Esophagus muscularis mucosa (tissue), 4 donors: ENCODE measurements at regions of chr6 and their contacts with region 1.

Region 1: GRCh38 chr6:53794720-53795253 is at the start of gene LRRC1:
- DNase-seq: peak; percentile 97
- H3K4me3 ChIP-seq: peak within 1 kb of the TSS; percentile 77 to 96 (median 88)
- H3K27ac ChIP-seq: peak within 1 kb of the TSS; percentile 76 to 88 (median 83)
- H3K4me1 ChIP-seq: peaks cover 16 to 37% (median 32%) of the 10 kb centered on the region in 4 donors
- H3K27me3 ChIP-seq: no peaks in the 10 kb centered on the region
- CTCF ChIP-seq: no peak
- EP300 ChIP-seq: no peak
- POLR2A ChIP-seq: no peak
- total RNA-seq, gene LRRC1: 10.4 to 13.0 (median 12.6) TPM

Region 2: DNA sequence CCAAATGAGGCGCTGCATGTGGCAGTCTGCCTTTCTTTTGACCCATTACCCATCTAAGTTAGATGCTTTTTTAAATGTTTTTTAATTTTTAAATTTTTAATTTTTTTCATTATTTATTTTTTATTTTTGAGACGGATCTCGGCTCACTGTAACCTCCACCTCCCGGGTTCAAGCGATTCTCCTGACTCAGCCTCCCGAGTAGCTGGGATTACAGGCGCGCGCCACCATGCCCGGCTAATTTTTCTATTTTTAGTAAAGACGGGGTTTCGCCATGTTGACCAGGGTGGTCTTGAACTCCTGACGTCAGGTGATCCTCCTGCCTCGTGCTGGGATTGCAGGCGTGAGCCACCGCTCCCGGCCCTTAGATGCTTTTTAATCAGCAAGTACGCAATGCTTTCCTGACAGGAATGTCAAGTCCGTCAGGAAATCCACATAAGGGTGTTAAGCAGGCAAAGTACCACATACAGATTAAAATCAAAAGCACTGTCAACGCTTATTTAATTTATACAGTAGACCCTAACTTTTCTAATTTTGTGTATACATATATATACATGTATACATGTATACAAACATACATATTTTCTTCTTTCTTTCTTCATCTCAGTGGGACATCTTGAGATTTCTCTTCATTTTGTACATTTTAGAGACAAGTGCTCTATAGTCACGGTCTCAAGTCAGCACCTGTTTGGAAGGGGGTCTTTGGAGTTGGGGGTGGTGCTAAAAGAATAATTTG is 798.7 kb before region 1 on chr6:
- intact Hi-C with region 1: loop called (anchors 10 kb)
- DNase-seq: no peak
- H3K4me3 ChIP-seq: peak overlapping the region; percentile 33 to 80 (median 73)
- H3K27ac ChIP-seq: peak overlapping the region; percentile 90 to 92 (median 92)
- H3K4me1 ChIP-seq: peaks cover 0 to 36% (median 28%) of the 10 kb centered on the region in 4 donors
- H3K27me3 ChIP-seq: no peaks in the 10 kb centered on the region
- CTCF ChIP-seq: no peak
- EP300 ChIP-seq: no peak
- POLR2A ChIP-seq: no peak

Region 3: DNA sequence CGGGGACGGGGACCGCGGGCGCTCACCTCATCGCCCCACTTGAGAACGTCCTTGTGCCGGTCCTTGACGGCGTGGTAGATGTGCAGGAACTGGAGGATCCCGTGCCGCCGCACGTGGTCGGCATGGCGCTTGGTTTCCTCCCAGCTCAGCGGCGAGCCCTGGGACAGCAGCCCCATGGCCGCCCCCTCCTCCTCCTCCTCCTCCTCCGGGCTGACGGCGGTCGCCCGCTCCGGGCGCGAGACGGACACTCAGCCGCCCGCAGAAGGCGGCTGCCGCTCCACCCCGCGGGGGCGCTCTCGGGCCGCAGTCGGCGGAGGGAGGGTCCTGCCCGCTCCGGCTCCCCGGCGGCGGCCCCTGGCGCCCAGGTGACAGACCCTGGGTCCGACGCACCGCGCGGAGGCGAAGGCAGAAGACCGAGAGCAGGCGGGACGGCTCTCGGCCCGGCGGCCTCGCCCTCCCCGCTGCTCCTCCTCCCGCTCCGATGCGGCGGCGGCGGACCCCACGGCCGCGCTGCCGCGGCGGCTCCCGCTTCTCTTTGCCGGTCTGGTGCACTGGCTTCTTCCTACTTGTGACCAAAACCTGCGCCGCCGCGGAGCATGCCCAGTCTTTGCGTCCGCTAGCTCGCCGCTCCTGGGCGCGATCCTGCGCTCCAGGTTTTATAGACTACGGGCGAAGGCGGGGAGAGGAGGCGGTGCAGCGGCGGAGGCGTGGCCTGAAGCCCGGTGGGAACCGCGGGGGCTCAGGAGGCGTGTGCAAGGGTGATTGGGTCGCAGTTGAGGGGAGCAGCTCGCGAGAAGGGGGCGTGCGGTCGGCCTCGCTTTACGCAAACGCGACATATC is 250.1 kb before region 1 on chr6 and contains the start of gene GCLC:
- intact Hi-C with region 1: loop called (anchors 10 kb)
- DNase-seq: peak; percentile 98
- H3K4me3 ChIP-seq: peak within 1 kb of the TSS; percentile 77 to 98 (median 86)
- H3K27ac ChIP-seq: peak within 1 kb of the TSS; percentile 95 to 99 (median 98)
- H3K4me1 ChIP-seq: peaks cover 25 to 72% (median 68%) of the 10 kb centered on the region in 4 donors
- H3K27me3 ChIP-seq: no peaks in the 10 kb centered on the region
- CTCF ChIP-seq: peak; percentile 72 to 83 (median 78)
- EP300 ChIP-seq: no peak
- POLR2A ChIP-seq: peak; percentile 58
- total RNA-seq, gene GCLC: 57.7 to 70.8 (median 64.6) TPM

Region 4: DNA sequence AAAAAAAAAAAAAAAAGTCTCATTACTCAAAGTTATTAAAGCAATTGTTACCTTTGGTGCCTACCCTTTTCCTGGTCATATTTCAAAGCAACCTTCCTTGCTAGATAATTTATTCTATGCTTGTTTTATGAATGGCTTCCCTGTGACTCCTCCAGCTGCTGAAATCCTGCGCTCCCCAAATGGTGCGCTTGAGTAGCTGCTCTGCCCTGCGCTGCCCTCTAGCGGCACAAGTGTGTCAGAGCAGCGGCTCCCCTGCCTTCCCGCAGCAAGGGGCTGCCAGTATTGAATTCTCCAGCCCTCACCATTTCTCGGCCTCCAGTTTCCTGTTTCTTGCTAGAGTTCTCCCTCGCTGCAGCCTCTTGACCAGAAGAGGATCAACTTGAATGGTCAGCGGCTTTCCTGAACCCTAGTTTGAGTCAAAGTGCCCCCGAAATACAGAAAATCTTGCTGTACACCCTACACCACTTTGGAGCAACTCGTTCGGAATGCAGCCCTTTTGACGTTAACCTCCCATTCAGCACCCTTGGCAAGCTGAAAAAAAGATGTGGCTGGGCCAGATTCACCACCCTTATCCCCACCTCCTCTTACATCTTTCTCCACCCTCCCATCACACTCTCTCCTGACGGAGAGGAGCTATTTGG is 68.9 kb before region 1 on chr6:
- intact Hi-C with region 1: loop called (anchors 5 kb)
- DNase-seq: no peak
- H3K4me3 ChIP-seq: no peak overlapping the region
- H3K27ac ChIP-seq: no peak overlapping the region
- H3K4me1 ChIP-seq: peaks cover 2 to 36% (median 33%) of the 10 kb centered on the region in 4 donors
- H3K27me3 ChIP-seq: no peaks in the 10 kb centered on the region
- CTCF ChIP-seq: peak; percentile 90 to 99 (median 93)
- EP300 ChIP-seq: no peak
- POLR2A ChIP-seq: no peak

Region 5: GRCh38 chr6:53894091-53894490 is 99.3 kb after region 1 on chr6:
- intact Hi-C with region 1: loop called (anchors 10 kb)
- DNase-seq: no peak
- H3K4me3 ChIP-seq: no peak overlapping the region
- H3K27ac ChIP-seq: no peak overlapping the region
- H3K4me1 ChIP-seq: peaks cover 0 to 24% (median 23%) of the 10 kb centered on the region in 4 donors
- H3K27me3 ChIP-seq: no peaks in the 10 kb centered on the region
- CTCF ChIP-seq: no peak
- EP300 ChIP-seq: no peak
- POLR2A ChIP-seq: no peak

Region 6: GRCh38 chr6:53926525-53926924 is 131.7 kb after region 1 on chr6:
- intact Hi-C with region 1: loop called (anchors 10 kb)
- DNase-seq: no peak
- H3K4me3 ChIP-seq: no peak overlapping the region
- H3K27ac ChIP-seq: peak overlapping the region in 1 of 4 donors; percentile 5
- H3K4me1 ChIP-seq: peaks cover 19 to 35% (median 23%) of the 10 kb centered on the region in 4 donors
- H3K27me3 ChIP-seq: no peaks in the 10 kb centered on the region
- CTCF ChIP-seq: no peak
- EP300 ChIP-seq: no peak
- POLR2A ChIP-seq: no peak

Region 7: GRCh38 chr6:53956068-53956711 is 161.4 kb after region 1 on chr6:
- intact Hi-C with region 1: loop called (anchors 1 kb)
- DNase-seq: no peak
- H3K4me3 ChIP-seq: no peak overlapping the region
- H3K27ac ChIP-seq: no peak overlapping the region
- H3K4me1 ChIP-seq: peaks cover 0 to 5% (median 1%) of the 10 kb centered on the region in 4 donors
- H3K27me3 ChIP-seq: no peaks in the 10 kb centered on the region
- CTCF ChIP-seq: peak; percentile 51 to 86 (median 61)
- EP300 ChIP-seq: no peak
- POLR2A ChIP-seq: no peak